ENCODE measurements at regions of chr16 and their contacts with region 1.

Region 1: DNA sequence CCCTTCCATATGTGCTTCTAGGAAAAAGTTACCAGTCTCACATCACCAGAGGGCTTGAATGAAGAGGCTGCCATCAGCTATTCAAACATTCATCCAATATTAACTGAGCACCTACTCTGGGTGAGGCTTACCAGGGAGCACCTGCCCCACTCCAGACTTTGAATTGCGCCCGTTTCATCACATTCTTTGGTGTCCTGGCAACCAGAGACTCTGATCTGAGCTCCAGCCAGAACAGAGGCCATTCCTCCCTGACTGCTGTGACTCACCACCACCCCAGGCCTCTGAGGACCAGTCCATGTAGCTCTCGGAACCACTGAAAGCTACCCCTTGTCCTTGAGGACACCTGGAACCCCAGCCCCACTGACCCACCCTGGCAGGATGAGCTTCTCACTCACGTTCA is at the start of gene C16orf96:
- DNase-seq: no peak
- ATAC-seq: no peak
- H3K4me3 ChIP-seq: no peak within 1 kb of the TSS
- H3K4me3 Mint-ChIP-seq: no peak within 1 kb of the TSS
- H3K27ac ChIP-seq: no peak within 1 kb of the TSS
- H3K27ac Mint-ChIP-seq: no peak within 1 kb of the TSS
- H3K4me1 ChIP-seq: no peaks in the 10 kb centered on the region
- H3K4me1 Mint-ChIP-seq: no peaks in the 10 kb centered on the region
- H3K27me3 ChIP-seq: no peaks in the 10 kb centered on the region
- H3K27me3 Mint-ChIP-seq: no peaks in the 10 kb centered on the region
- CTCF ChIP-seq: no peak
- total RNA-seq, gene C16orf96: 0.27 to 0.42 TPM

Region 2: DNA sequence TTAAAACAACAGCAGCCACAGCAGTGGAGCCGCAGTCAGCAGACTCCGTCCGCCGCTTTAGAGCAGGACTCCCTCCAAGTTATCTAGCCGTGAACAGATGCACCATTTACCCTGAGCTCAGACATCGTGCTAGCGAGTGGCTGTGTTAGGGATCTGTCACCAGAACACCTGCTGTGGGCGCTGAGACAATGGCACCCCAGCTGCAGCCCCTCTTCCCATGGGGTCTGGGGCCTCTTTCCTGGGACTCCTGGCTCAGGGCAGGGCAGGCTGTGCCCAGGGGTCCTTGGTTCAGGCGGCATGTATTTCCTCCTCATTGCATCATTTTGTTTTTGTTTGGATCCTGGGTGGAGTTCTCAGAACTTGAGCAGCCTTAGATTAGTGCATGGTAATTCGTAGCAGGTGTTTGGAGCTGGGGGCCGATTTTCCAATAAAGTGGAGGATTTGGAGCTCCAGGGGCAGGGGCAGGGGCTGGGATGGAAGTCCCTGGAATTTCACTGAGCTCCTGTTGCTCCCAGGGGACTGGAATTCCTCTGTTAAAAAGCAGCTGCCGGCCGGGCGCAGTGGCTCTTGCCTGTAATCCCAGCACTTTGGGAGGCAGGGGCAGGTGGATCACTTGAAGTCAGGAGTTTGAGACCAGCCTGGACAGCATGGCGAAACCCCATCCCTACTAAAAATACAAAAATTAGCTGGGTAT is 105.0 kb before region 1 on chr16:
- CTCF ChIA-PET with region 1: no interaction called
- POLR2A ChIA-PET with region 1: no interaction called
- intact Hi-C with region 1: loop called in 1 of 2 experiments (anchors 5 kb)
- DNase-seq: no peak
- ATAC-seq: no peak
- H3K4me3 ChIP-seq: no peak overlapping the region
- H3K4me3 Mint-ChIP-seq: no peak overlapping the region
- H3K27ac ChIP-seq: no peak overlapping the region
- H3K27ac Mint-ChIP-seq: peak overlapping the region; percentile 18
- H3K4me1 ChIP-seq: no peaks in the 10 kb centered on the region
- H3K4me1 Mint-ChIP-seq: no peaks in the 10 kb centered on the region
- H3K27me3 ChIP-seq: no peaks in the 10 kb centered on the region
- H3K27me3 Mint-ChIP-seq: no peaks in the 10 kb centered on the region
- CTCF ChIP-seq: no peak

Measured in CD8-positive, alpha-beta T cell (primary cell).